Panc1 (cell line): ENCODE measurements at regions of chr16 and their contacts with region 1.

Region 1: DNA sequence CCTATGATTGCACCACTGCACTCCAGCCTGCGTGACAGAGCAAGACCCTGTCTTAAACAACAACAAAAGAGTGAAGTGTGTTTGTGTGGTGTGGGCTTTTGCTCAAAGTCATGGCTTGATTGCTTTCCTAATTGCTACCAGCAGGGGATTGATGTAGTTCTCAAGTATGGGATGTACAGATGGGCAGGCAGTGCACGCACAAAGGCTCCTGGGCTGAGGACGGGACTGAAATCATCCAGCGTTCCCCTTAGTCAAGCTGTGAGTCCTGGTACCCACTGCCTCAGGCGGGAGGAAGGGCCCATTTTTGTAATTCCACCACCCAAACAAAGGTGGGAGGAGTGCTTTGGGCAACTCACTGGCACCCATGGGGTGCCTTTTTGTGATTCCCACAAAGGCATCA is 47.3 kb downstream of the GDE1 start:
- DNase-seq: no peak
- ATAC-seq: peak; percentile 69
- H3K4me3 ChIP-seq: no peak overlapping the region
- H3K27ac ChIP-seq: no peak overlapping the region
- H3K4me1 ChIP-seq: no peaks in the 10 kb centered on the region
- H3K27me3 ChIP-seq: no peaks in the 10 kb centered on the region
- CTCF ChIP-seq: no peak

Region 2: DNA sequence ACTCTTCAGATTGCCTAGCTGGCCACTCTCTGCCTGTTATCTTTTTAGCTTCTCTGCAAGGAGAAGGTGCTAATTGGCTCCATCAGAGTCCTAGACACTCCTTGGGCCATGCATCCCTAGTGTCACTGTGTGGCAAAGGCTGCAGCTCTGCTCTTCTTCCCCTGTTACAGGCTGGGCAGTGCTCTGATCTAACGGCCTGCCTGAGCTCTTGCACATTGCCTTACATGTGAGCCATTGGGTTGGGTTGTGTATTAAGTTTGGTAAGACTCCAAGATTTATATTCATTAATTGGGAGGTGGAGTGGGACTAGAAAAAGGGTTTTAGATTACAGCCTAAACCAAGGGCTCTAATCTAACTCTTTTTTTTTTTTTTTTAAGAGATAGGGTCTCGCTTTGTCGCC is 329.6 kb before region 1 on chr16:
- CTCF ChIA-PET with region 1: no interaction called
- POLR2A ChIA-PET with region 1: interaction called, 16 read pairs
- in situ Hi-C with region 1: no loop called
- intact Hi-C with region 1: no loop called
- DNase-seq: no peak
- ATAC-seq: no peak
- H3K4me3 ChIP-seq: no peak overlapping the region
- H3K27ac ChIP-seq: no peak overlapping the region
- H3K4me1 ChIP-seq: peaks cover 4% of the 10 kb centered on the region; the same call in 1 of the 2 replicates
- H3K27me3 ChIP-seq: 0 out of 2 replicates have a peak, but pooled peaks cover 2% of the 10 kb centered on the region
- CTCF ChIP-seq: no peak

Region 3: DNA sequence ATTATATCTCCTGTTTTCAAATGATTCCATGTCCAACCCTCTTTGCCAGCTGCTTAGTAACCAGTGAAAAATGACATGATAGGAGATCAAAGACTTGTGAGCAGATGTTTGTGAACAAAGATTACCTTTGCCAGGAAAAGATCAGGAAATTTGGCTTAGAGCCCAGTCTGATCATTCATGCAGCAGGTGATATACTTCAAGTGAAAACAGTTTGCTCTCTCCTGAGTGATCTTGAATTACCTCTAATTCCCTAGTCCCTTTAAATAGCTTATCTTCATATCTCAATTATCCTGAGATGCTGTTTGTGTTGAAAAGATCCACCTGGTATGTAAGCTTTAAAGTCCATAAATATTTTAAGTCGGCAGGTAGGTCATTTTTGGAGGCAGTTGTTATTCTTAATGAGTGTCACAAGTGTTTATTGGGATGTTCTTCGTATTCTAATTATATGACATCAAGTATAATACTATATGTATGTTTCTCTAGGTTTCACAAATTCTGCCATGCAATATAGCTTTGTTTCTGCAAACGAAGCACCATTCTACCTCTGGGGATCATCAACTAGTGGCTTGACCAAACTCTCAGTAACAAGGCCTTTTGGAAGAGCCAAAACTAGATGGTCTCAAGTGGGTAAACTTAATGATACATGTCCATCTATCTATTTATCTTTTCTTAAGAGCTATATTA is 67.7 kb after region 1 on chr16:
- CTCF ChIA-PET with region 1: no interaction called
- POLR2A ChIA-PET with region 1: no interaction called
- in situ Hi-C with region 1: no loop called
- intact Hi-C with region 1: no loop called
- DNase-seq: no peak
- ATAC-seq: no peak
- H3K4me3 ChIP-seq: no peak overlapping the region
- H3K27ac ChIP-seq: no peak overlapping the region
- H3K4me1 ChIP-seq: no peaks in the 10 kb centered on the region
- H3K27me3 ChIP-seq: no peaks in the 10 kb centered on the region
- CTCF ChIP-seq: no peak